Activated CD4-positive, alpha-beta memory T cell treated with anti-CD3 and anti-CD28 coated beads for 36 hours (primary cell): ENCODE measurements at regions of chr11 and their contacts with region 1.

Region 1: DNA sequence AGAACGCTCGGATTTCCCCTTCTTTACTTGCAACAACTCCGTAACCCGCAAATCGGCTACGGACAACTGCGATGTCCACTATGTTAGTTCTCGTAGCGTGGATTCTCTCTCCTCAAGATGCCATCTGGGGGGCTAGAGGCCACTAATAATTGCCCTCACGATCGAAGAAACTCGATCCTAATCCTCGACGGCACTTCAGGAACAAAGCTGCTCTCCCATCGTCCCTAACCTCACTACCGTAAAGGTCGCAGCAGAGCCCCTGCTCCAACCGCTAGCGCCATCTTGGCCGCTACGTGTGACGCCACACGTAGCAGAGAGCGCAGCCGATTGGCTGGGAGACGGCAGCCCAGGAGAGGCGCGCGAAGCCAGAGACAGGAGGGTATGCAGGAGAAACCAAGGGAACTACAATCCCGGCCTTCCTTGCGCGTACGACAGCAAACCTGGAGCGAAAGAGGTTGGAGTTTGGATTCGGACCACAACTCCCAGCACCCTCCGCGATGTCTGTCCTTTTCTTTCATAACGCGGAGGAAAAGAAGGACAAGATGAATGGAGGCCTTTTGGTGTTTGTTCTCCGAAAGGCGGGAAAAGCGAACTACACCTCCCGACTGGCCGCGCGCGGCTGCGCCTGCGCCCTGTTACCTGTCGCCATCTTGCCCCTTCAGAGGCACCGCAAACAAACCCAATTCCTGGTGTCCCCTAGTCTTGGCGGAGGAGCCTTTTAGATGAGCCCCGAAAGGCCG is at the start of gene EMSY:
- DNase-seq: peak; percentile 95
- H3K4me3 Mint-ChIP-seq: peak within 1 kb of the TSS; percentile 98
- H3K27ac Mint-ChIP-seq: peak within 1 kb of the TSS; percentile 91
- H3K4me1 Mint-ChIP-seq: peaks cover 33% of the 10 kb centered on the region
- H3K27me3 Mint-ChIP-seq: no peaks in the 10 kb centered on the region
- total RNA-seq, gene EMSY: 23.5 to 25.4 TPM

Region 2: DNA sequence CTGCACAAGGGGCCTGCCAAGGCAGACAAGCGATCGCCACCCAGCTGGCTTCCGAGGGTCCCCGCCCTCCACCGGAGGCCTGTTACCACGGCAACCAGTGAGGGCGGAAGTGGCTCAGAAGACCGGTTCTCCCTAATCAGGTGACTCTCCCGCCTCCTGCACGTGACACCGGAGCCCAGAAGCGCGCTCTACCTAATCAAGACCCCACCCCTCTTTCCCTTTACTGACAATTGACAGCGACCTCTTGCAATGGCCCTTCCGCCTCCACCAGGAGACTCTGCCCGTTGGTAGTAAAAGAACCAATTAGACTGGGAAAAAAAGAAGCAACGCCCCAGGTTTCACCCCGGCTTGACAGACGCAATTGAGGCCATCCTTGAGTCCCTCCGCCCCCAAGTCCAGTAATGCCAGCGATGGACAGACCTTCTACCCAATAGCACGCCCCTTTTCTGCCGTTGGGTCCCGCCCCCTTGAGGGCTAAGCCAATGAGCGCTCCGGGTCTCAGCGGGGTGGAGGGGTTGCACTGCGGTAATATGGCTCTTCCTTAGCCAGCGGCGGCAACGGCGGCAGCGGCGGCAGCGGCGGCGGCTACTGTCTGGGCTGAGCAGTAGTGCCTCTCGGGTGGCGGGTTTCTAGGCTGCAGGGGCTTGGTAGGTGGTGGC is 629.7 kb before region 1 on chr11 and contains the start of gene UVRAG:
- CTCF ChIA-PET with region 1: no interaction called
- POLR2A ChIA-PET with region 1: no interaction called
- intact Hi-C with region 1: loop called (anchors 10 kb)
- DNase-seq: peak; percentile 98
- H3K4me3 Mint-ChIP-seq: peak within 1 kb of the TSS; percentile 88
- H3K27ac Mint-ChIP-seq: peak within 1 kb of the TSS; percentile 86
- H3K4me1 Mint-ChIP-seq: peaks cover 16% of the 10 kb centered on the region
- H3K27me3 Mint-ChIP-seq: no peaks in the 10 kb centered on the region
- total RNA-seq, gene UVRAG: 15.5 to 16.7 TPM

Region 3: DNA sequence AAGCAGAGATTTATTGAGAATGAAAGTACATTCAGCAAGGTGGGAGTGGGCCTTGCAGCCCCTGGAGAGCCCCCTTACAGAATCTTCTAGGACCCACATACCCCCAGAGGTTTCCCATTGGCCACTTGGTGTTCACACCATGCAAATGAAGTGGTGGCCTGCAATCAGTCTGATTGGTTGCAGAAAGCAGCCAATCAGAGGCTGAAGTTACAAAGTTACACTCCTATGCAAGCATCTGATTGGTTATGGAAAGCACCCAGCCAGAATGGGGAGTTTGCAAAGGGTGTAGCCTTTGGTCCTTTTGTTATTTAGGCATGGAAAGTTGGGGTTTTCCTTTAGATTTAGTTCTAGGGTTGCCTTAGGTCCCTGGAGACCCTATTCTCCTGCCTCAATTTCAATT is 594.7 kb before region 1 on chr11:
- CTCF ChIA-PET with region 1: no interaction called
- POLR2A ChIA-PET with region 1: no interaction called
- intact Hi-C with region 1: no loop called
- DNase-seq: no peak
- H3K4me3 Mint-ChIP-seq: no peak overlapping the region
- H3K27ac Mint-ChIP-seq: no peak overlapping the region
- H3K4me1 Mint-ChIP-seq: peaks cover 13% of the 10 kb centered on the region
- H3K27me3 Mint-ChIP-seq: no peaks in the 10 kb centered on the region

Region 4: GRCh38 chr11:76339221-76339620 is 105.3 kb before region 1 on chr11:
- CTCF ChIA-PET with region 1: no interaction called
- POLR2A ChIA-PET with region 1: no interaction called
- intact Hi-C with region 1: no loop called
- DNase-seq: peak; percentile 23
- H3K4me3 Mint-ChIP-seq: no peak overlapping the region
- H3K27ac Mint-ChIP-seq: no peak overlapping the region
- H3K4me1 Mint-ChIP-seq: peaks cover 21% of the 10 kb centered on the region
- H3K27me3 Mint-ChIP-seq: no peaks in the 10 kb centered on the region

Region 5: DNA sequence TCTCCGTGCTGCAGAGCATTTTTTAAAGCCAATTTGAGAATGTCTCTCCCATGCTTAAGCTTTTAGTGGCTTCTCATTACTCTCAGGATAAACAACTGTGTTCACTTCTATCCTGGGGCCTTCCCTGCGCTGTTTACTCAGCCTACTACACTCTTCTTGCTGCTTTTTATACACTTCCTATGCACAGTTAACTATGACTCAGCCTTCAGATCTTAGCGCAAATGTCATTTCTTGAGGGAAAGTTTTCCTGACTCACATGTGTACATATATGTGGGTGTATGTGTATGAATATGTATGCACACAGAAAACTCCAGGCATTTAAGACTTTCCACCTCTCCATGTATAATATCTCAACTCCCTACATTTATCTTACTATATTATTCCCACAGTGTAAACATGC is 73.4 kb before region 1 on chr11:
- CTCF ChIA-PET with region 1: no interaction called
- POLR2A ChIA-PET with region 1: no interaction called
- intact Hi-C with region 1: loop called (anchors 2 kb)
- DNase-seq: peak; percentile 63
- H3K4me3 Mint-ChIP-seq: no peak overlapping the region
- H3K27ac Mint-ChIP-seq: peak overlapping the region; percentile 55
- H3K4me1 Mint-ChIP-seq: peaks cover 59% of the 10 kb centered on the region
- H3K27me3 Mint-ChIP-seq: no peaks in the 10 kb centered on the region

Region 6: GRCh38 chr11:76419896-76420295 is 24.7 kb before region 1 on chr11:
- CTCF ChIA-PET with region 1: interaction called, 5 read pairs
- POLR2A ChIA-PET with region 1: interaction called, 5 read pairs
- intact Hi-C with region 1: loop called (anchors 1 kb)
- DNase-seq: peak; percentile 30
- H3K4me3 Mint-ChIP-seq: no peak overlapping the region
- H3K27ac Mint-ChIP-seq: no peak overlapping the region
- H3K4me1 Mint-ChIP-seq: peaks cover 11% of the 10 kb centered on the region
- H3K27me3 Mint-ChIP-seq: peaks cover 11% of the 10 kb centered on the region

Region 7: GRCh38 chr11:76670485-76671236 is 226.1 kb after region 1 on chr11 and contains the start of gene LRRC32:
- CTCF ChIA-PET with region 1: no interaction called
- POLR2A ChIA-PET with region 1: no interaction called
- intact Hi-C with region 1: loop called (anchors 5 kb)
- DNase-seq: peak; percentile 35
- H3K4me3 Mint-ChIP-seq: peak within 1 kb of the TSS; percentile 65
- H3K27ac Mint-ChIP-seq: no peak within 1 kb of the TSS
- H3K4me1 Mint-ChIP-seq: peaks cover 28% of the 10 kb centered on the region
- H3K27me3 Mint-ChIP-seq: peaks cover 22% of the 10 kb centered on the region
- total RNA-seq, gene LRRC32: 11.2 to 12.3 TPM